Spleen (tissue), 13 donors: ENCODE measurements at regions of chr19 and their contacts with region 1.

Region 1: DNA sequence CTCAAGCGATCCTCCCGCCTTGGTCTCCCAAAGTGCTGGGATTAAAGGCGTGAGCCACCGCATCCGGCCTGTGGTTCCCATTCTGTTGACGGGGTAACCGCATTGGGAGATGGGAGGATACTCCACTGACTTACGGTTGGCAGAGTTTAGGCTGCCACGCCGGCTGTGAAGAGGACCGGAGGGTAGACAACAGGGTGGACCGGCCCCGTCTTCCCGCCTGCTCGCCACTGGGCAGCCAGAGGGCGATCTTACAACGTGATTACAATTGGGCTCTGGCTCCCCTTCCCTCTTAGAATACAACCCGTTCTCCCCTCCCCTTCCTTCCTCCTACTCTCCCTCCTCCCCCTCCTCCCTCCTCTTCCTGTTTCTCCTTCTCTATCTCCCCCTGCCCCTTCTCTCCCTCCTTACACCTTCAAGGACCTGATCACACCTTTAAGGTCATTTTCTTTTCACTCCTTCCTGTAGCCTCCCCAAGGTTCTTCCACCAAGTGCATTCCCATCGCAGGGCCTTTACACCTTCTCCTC is 957 bp upstream of the CCDC194 start:
- DNase-seq: peak; percentile 86
- H3K4me3 ChIP-seq: no peak overlapping the region
- H3K27ac ChIP-seq: peak overlapping the region in 7 of 8 donors; percentile 26 to 64 (median 56)
- H3K4me1 ChIP-seq: peaks cover 12 to 50% (median 44%) of the 10 kb centered on the region in 6 donors
- H3K27me3 ChIP-seq: peaks cover 0 to 26% (median 0%) of the 10 kb centered on the region in 7 donors
- CTCF ChIP-seq: peak; percentile 58 to 89 (median 82)
- POLR2A ChIP-seq: no peak

Region 2: DNA sequence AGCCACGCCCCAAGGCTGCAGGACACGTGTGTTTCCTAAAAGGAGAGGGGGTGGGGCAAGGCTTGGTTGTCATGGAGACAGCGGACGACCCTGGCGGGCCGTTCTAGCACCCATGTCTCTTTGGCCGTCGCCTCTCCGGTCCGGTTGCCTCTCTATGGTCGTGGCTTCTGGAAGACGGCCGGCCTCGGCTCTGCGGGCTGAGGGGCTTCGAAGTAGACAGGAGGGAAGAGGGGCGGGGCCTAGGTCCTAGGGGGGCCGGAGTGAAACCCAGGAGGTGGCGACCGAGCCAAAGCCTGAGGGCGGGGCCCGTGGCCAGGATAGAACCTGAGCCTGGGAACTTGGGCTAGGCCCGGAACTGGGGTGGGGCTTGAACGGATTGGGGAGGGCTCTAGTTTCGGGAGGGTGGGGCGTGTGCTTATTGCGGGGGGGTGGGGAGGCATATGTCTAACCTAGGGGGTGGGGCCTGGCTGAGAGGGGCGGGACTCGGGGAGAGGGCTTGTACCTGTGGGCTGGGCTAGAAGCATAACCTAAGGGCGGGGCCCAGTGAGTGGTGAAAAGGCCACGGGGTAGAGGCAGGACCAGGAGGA is 74.6 kb after region 1 on chr19:
- intact Hi-C with region 1: loop called (anchors 5 kb)
- DNase-seq: peak; percentile 97
- H3K4me3 ChIP-seq: peak overlapping the region; percentile 58 to 89 (median 74)
- H3K27ac ChIP-seq: peak overlapping the region; percentile 48 to 89 (median 84)
- H3K4me1 ChIP-seq: peaks cover 11 to 63% (median 37%) of the 10 kb centered on the region in 6 donors
- H3K27me3 ChIP-seq: peaks cover 0 to 6% (median 0%) of the 10 kb centered on the region in 7 donors
- CTCF ChIP-seq: no peak
- POLR2A ChIP-seq: no peak